Common myeloid progenitor, CD34-positive (primary cell): ENCODE measurements at regions of chr5 and their contacts with region 1.

Region 1: GRCh38 chr5:141484641-141485311 is at the start of gene PCDHGC4:
- DNase-seq: peak in 2 of 3 donors; percentile 37 to 47
- H3K4me3 ChIP-seq: peak within 1 kb of the TSS in 5 of 7 experiments; percentile 40 to 61 (median 44)
- H3K27ac ChIP-seq: no peak within 1 kb of the TSS
- H3K4me1 ChIP-seq: peaks cover 0 to 14% (median 5%) of the 10 kb centered on the region in 4 experiments
- H3K27me3 ChIP-seq: peaks cover 7 to 93% (median 31%) of the 10 kb centered on the region in 5 experiments

Region 2: GRCh38 chr5:141430332-141431113 is 54.3 kb before region 1 on chr5 and contains the start of gene PCDHGA12:
- CTCF ChIA-PET with region 1: interaction called, 14 read pairs
- POLR2A ChIA-PET with region 1: no interaction called
- DNase-seq: peak; percentile 82 to 88 (median 86)
- H3K4me3 ChIP-seq: peak within 1 kb of the TSS in 6 of 7 experiments; percentile 21 to 56 (median 48)
- H3K27ac ChIP-seq: no peak within 1 kb of the TSS
- H3K4me1 ChIP-seq: peaks cover 2 to 6% (median 5%) of the 10 kb centered on the region in 4 experiments
- H3K27me3 ChIP-seq: peaks cover 8 to 58% (median 25%) of the 10 kb centered on the region in 5 experiments